Mammary epithelial cell (primary cell): ENCODE measurements at regions of chr1 and their contacts with region 1.

Region 1: DNA sequence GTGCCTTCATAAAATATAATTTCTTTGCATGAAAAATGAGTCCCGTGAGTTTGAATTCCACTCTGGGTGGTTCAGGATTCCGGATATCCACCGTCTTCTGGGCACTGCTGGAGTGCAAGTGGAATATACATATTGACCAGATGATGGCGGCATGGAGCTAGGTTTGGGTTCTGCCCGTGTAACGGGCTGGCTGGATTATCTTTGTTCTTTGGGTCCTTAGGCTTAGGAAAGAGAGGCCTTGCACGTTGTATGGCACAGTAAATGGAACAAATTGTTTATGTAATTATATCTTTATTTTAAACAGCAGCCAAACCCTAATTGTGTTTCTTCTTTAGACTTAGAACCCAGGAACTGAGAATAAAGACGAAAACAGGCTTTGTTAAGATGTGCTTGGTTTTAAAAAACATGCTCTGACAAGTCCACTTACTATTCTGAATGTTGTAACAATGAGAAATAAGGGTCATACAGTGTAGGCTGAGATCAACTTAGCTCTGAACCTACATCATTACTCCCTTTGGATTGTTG is 13.5 kb upstream of the ACBD6 start:
- DNase-seq: peak; percentile 72
- H3K4me3 ChIP-seq: peak overlapping the region in 2 of 3 experiments; percentile 11 to 35
- H3K27ac ChIP-seq: peak overlapping the region; percentile 67
- H3K4me1 ChIP-seq: peaks cover 14% of the 10 kb centered on the region
- H3K27me3 ChIP-seq: no peaks in the 10 kb centered on the region
- CTCF ChIP-seq: peak; percentile 75 to 80

Region 2: GRCh38 chr1:180468311-180468710 is 47.6 kb before region 1 on chr1:
- CTCF ChIA-PET with region 1: no interaction called
- dilution Hi-C with region 1: no loop called
- in situ Hi-C with region 1: no loop called
- intact Hi-C with region 1: no loop called
- DNase-seq: no peak
- H3K4me3 ChIP-seq: no peak overlapping the region
- H3K27ac ChIP-seq: no peak overlapping the region
- H3K4me1 ChIP-seq: no peaks in the 10 kb centered on the region
- H3K27me3 ChIP-seq: no peaks in the 10 kb centered on the region
- CTCF ChIP-seq: no peak

Region 3: GRCh38 chr1:180606155-180606554 is 90.2 kb after region 1 on chr1:
- CTCF ChIA-PET with region 1: no interaction called
- dilution Hi-C with region 1: no loop called
- in situ Hi-C with region 1: no loop called
- intact Hi-C with region 1: no loop called
- DNase-seq: no peak
- H3K4me3 ChIP-seq: no peak overlapping the region
- H3K27ac ChIP-seq: no peak overlapping the region
- H3K4me1 ChIP-seq: peaks cover 17% of the 10 kb centered on the region
- H3K27me3 ChIP-seq: no peaks in the 10 kb centered on the region
- CTCF ChIP-seq: no peak

Region 4: GRCh38 chr1:180623579-180624347 is 107.8 kb after region 1 on chr1:
- CTCF ChIA-PET with region 1: no interaction called
- dilution Hi-C with region 1: no loop called
- in situ Hi-C with region 1: loop called in 1 of 2 experiments (anchors 10 kb)
- intact Hi-C with region 1: no loop called
- DNase-seq: no peak
- H3K4me3 ChIP-seq: no peak overlapping the region
- H3K27ac ChIP-seq: no peak overlapping the region
- H3K4me1 ChIP-seq: no peaks in the 10 kb centered on the region
- H3K27me3 ChIP-seq: no peaks in the 10 kb centered on the region
- CTCF ChIP-seq: peak in 1 of 2 donors; percentile 23

Region 5: GRCh38 chr1:180778782-180779398 is 263.0 kb after region 1 on chr1:
- CTCF ChIA-PET with region 1: no interaction called
- dilution Hi-C with region 1: no loop called
- in situ Hi-C with region 1: no loop called
- intact Hi-C with region 1: loop called (anchors 2 kb)
- DNase-seq: peak; percentile 12
- H3K4me3 ChIP-seq: no peak overlapping the region
- H3K27ac ChIP-seq: no peak overlapping the region
- H3K4me1 ChIP-seq: no peaks in the 10 kb centered on the region
- H3K27me3 ChIP-seq: no peaks in the 10 kb centered on the region
- CTCF ChIP-seq: peak; percentile 63 to 66

Region 6: DNA sequence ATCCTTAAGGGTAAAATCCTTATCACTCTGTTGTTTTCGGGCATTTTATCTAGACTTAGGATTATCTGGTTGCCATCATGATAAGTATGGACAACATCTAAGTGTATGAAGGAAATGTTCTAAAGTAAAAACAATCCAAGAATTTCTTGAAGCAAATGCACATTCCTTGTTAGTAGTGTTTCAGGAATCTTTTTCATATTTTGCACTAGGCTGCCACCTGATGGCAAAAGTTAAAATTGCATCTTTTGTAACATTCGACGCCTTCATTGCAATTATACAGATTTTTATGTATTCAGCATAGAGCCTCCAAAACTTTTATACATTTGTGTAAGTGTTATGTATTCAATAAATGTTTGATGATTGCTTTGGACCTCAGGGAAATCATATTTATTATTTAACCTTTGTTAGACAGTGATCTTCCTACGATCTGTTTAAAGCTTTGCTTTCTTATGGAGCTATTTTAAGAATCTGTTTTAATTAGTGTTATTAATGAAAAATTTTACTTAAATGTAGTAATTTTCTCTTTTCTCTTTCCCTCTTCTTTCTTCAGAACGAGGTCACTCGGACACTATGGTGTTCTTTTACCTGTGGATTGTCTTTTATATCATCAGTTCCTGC is 347.3 kb after region 1 on chr1:
- CTCF ChIA-PET with region 1: interaction called, 9 read pairs
- dilution Hi-C with region 1: no loop called
- in situ Hi-C with region 1: loop called (anchors 5 to 10 kb)
- intact Hi-C with region 1: loop called (anchors 5 kb)
- DNase-seq: peak; percentile 32
- H3K4me3 ChIP-seq: no peak overlapping the region
- H3K27ac ChIP-seq: no peak overlapping the region
- H3K4me1 ChIP-seq: peaks cover 9% of the 10 kb centered on the region
- H3K27me3 ChIP-seq: no peaks in the 10 kb centered on the region
- CTCF ChIP-seq: peak; percentile 51 to 62

Region 7: GRCh38 chr1:181142096-181142958 is 626.4 kb after region 1 on chr1:
- CTCF ChIA-PET with region 1: no interaction called
- dilution Hi-C with region 1: no loop called
- in situ Hi-C with region 1: no loop called
- intact Hi-C with region 1: loop called (anchors 5 kb)
- DNase-seq: peak; percentile 84
- H3K4me3 ChIP-seq: peak overlapping the region in 1 of 3 experiments; percentile 33
- H3K27ac ChIP-seq: peak overlapping the region; percentile 63
- H3K4me1 ChIP-seq: peaks cover 49% of the 10 kb centered on the region
- H3K27me3 ChIP-seq: no peaks in the 10 kb centered on the region
- CTCF ChIP-seq: peak; percentile 95 to 97